MCF 10A (cell line): ENCODE measurements at regions of chr6 and their contacts with region 1.

Region 1: GRCh38 chr6:52419809-52420670 is at the start of gene EFHC1:
- DNase-seq: peak; percentile 97
- H3K4me3 Mint-ChIP-seq: no peak within 1 kb of the TSS
- H3K27ac Mint-ChIP-seq: no peak within 1 kb of the TSS
- H3K4me1 Mint-ChIP-seq: peaks cover 32% of the 10 kb centered on the region
- H3K27me3 Mint-ChIP-seq: no peaks in the 10 kb centered on the region
- CTCF ChIP-seq: no peak
- total RNA-seq, gene EFHC1: 26.3 and 26.9 TPM in 2 replicates

Region 2: DNA sequence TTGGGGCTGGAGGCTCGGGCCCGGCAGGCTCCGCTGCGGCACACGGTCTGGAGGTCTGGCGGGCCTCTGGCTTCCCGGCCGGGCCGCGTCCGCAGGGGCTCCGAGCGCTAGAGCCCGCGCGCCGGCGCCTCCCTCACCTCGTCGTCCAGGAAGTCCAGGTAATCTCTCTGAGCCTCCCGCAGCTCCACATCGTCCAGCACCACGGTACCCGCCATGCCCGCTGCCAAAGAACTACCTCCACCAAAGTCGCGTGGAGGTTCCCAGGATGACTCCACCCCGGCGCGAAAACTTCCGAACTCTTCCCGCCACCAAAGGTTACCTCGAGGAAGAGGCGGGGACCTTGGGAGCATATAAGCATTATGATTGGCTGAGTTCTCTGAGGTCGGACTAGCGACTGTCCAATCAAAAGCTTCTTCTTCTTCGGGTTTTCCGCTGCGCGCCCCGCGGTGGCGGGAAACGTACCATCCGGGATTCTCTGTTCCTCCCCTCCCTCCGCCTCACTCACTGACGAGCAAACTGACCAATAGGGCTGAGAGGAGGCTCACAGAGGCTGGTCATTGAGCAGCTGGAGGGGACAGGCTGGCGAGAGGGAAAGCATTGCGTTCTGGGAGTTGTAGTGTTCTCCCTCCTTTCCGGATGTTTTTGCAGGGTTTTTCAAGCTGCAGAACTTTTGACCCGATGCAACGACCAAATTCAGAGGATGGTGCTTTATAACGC is 135.4 kb before region 1 on chr6 and contains the start of gene MCM3:
- CTCF ChIA-PET with region 1: interaction called, 4 read pairs
- POLR2A ChIA-PET with region 1: interaction called, 10 read pairs
- intact Hi-C with region 1: no loop called
- DNase-seq: peak; percentile 99
- H3K4me3 Mint-ChIP-seq: no peak within 1 kb of the TSS
- H3K27ac Mint-ChIP-seq: peak within 1 kb of the TSS; percentile 43
- H3K4me1 Mint-ChIP-seq: peaks cover 12% of the 10 kb centered on the region
- H3K27me3 Mint-ChIP-seq: no peaks in the 10 kb centered on the region
- CTCF ChIP-seq: no peak
- total RNA-seq, gene MCM3: 16.3 and 24.9 TPM in 2 replicates

Region 3: GRCh38 chr6:52503848-52504781 is 84.1 kb after region 1 on chr6:
- CTCF ChIA-PET with region 1: interaction called, 12 read pairs
- POLR2A ChIA-PET with region 1: interaction called, 42 read pairs
- intact Hi-C with region 1: loop called (anchors 1 kb)
- DNase-seq: peak; percentile 99
- H3K4me3 Mint-ChIP-seq: peak overlapping the region; percentile 28
- H3K27ac Mint-ChIP-seq: peak overlapping the region; percentile 61
- H3K4me1 Mint-ChIP-seq: peaks cover 34% of the 10 kb centered on the region
- H3K27me3 Mint-ChIP-seq: no peaks in the 10 kb centered on the region
- CTCF ChIP-seq: no peak

Region 4: DNA sequence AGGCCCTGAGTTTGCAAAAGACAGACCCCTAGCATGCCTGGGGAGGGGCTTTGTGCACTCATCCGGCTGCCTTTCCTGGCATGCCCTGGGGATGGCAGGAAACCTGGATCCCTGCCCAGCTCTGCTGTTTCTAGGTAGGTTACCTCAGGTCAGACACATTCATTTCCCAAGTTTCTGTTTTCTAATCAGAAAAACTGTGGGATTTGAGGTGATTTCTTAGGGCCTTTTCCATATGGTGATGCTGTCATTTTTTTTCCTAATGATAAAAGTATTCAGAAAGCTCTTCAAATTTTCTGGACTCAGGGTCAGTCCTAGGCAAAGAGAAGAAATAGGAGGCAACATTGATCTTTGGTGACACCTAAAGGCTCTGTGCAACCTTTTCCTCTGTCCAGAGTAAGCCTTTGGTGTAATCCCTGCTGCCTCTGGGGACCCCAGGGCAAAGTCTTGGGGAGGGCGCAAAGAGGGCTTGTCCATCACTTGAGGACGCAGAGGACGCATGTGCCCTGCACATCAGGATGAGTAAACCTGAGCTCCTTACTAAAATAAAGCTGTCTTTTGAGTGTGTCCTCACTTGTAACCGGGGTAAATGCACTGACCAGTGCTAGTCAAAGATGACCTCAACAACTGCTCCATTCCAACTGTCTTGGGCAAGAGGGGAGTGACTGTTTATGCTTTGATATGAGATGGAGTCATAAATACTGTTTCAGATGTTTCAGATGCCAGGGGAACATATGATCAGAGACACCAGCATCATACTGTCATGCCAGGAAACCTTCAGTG is 170.3 kb after region 1 on chr6:
- CTCF ChIA-PET with region 1: interaction called, 74 read pairs
- POLR2A ChIA-PET with region 1: interaction called, 11 read pairs
- intact Hi-C with region 1: loop called (anchors 1 kb)
- DNase-seq: peak; percentile 68
- H3K4me3 Mint-ChIP-seq: no peak overlapping the region
- H3K27ac Mint-ChIP-seq: no peak overlapping the region
- H3K4me1 Mint-ChIP-seq: peaks cover 19% of the 10 kb centered on the region
- H3K27me3 Mint-ChIP-seq: no peaks in the 10 kb centered on the region
- CTCF ChIP-seq: peak; percentile 11

Region 5: GRCh38 chr6:52620906-52621190 is 200.8 kb after region 1 on chr6:
- CTCF ChIA-PET with region 1: no interaction called
- POLR2A ChIA-PET with region 1: no interaction called
- intact Hi-C with region 1: no loop called
- DNase-seq: peak; percentile 47
- H3K4me3 Mint-ChIP-seq: no peak overlapping the region
- H3K27ac Mint-ChIP-seq: no peak overlapping the region
- H3K4me1 Mint-ChIP-seq: peaks cover 6% of the 10 kb centered on the region
- H3K27me3 Mint-ChIP-seq: no peaks in the 10 kb centered on the region
- CTCF ChIP-seq: no peak

Region 6: GRCh38 chr6:52653151-52653550 is 233.1 kb after region 1 on chr6:
- CTCF ChIA-PET with region 1: interaction called, 112 read pairs
- POLR2A ChIA-PET with region 1: interaction called, 4 read pairs
- intact Hi-C with region 1: no loop called
- DNase-seq: no peak
- H3K4me3 Mint-ChIP-seq: no peak overlapping the region
- H3K27ac Mint-ChIP-seq: no peak overlapping the region
- H3K4me1 Mint-ChIP-seq: no peaks in the 10 kb centered on the region
- H3K27me3 Mint-ChIP-seq: no peaks in the 10 kb centered on the region
- CTCF ChIP-seq: no peak

Region 7: DNA sequence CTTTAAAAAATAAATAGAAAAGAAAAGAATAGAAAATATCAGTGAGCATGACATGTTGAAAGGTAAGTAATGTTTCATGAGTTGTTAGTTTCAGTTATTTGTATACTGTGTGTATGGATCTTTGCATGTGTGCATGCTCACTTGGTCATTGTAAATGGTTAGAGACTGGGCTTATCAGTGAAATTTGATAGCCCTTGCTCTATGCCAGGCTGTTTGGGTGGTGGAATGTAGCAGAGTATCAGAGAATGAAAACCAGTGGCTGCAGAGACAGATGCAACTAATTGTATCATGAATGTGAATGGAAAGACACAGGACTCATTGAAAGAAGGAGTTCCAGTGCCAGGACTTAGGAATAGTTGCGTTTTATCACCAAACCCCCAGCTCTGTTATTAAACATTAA is 339.0 kb after region 1 on chr6:
- CTCF ChIA-PET with region 1: no interaction called
- POLR2A ChIA-PET with region 1: no interaction called
- intact Hi-C with region 1: no loop called
- DNase-seq: no peak
- H3K4me3 Mint-ChIP-seq: no peak overlapping the region
- H3K27ac Mint-ChIP-seq: no peak overlapping the region
- H3K4me1 Mint-ChIP-seq: peaks cover 11% of the 10 kb centered on the region
- H3K27me3 Mint-ChIP-seq: no peaks in the 10 kb centered on the region
- CTCF ChIP-seq: no peak

Region 8: DNA sequence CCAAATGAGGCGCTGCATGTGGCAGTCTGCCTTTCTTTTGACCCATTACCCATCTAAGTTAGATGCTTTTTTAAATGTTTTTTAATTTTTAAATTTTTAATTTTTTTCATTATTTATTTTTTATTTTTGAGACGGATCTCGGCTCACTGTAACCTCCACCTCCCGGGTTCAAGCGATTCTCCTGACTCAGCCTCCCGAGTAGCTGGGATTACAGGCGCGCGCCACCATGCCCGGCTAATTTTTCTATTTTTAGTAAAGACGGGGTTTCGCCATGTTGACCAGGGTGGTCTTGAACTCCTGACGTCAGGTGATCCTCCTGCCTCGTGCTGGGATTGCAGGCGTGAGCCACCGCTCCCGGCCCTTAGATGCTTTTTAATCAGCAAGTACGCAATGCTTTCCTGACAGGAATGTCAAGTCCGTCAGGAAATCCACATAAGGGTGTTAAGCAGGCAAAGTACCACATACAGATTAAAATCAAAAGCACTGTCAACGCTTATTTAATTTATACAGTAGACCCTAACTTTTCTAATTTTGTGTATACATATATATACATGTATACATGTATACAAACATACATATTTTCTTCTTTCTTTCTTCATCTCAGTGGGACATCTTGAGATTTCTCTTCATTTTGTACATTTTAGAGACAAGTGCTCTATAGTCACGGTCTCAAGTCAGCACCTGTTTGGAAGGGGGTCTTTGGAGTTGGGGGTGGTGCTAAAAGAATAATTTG is 576.0 kb after region 1 on chr6:
- CTCF ChIA-PET with region 1: interaction called, 3 read pairs
- POLR2A ChIA-PET with region 1: interaction called, 4 read pairs
- intact Hi-C with region 1: loop called (anchors 2 kb)
- DNase-seq: peak; percentile 82
- H3K4me3 Mint-ChIP-seq: peak overlapping the region; percentile 89
- H3K27ac Mint-ChIP-seq: peak overlapping the region; percentile 99
- H3K4me1 Mint-ChIP-seq: peaks cover 23% of the 10 kb centered on the region
- H3K27me3 Mint-ChIP-seq: no peaks in the 10 kb centered on the region
- CTCF ChIP-seq: no peak